Colonic mucosa (tissue), 4 donors: ENCODE measurements at regions of chr1 and their contacts with region 1.

Region 1: DNA sequence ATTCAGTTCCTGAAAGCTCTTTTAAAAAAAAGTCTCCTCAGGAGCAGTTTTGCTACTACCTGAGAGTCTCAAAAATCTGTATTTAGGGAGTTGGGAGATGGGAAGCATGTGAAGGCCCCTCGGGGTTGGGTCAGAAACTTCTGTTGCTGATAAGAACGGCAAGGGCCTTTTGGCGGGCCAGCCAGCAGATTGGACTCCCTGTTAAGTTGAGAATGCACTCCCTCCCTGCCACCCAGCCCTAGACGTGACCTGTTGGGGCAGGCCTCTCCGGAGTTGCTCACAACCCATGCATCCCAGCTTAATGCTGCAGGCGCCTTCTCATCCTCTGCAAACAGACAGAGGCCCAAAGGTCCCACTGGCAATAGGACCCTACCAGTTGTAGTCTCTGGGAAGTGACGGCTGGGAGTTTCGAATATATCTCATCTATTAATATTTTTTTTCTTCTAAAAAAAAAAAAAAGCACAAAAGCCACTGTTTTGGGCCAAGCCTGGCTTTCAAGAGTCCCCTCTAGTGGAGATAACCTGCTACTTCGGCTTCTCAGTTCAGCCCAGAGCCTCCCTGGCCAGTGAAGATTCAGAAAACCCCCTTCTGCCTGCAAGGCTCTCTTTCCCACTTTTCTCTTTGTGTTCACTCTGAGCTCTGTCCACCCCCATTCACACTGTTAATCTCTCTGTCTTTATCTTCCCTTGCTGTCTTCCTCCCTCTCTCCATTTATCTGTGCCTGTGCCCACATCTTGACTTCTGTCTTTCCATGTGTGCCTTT is 5.3 kb downstream of the PLXNA2 start:
- DNase-seq: peak; percentile 44
- H3K4me3 ChIP-seq: no peak overlapping the region
- H3K27ac ChIP-seq: peak overlapping the region; percentile 77
- H3K4me1 ChIP-seq: peaks cover 40% of the 10 kb centered on the region
- H3K27me3 ChIP-seq: no peaks in the 10 kb centered on the region
- CTCF ChIP-seq: peak; percentile 68

Region 2: GRCh38 chr1:208184088-208184911 is 54.6 kb before region 1 on chr1:
- intact Hi-C with region 1: loop called (anchors 10 kb)
- DNase-seq: peak; percentile 86
- H3K4me3 ChIP-seq: no peak overlapping the region
- H3K27ac ChIP-seq: peak overlapping the region; percentile 82
- H3K4me1 ChIP-seq: peaks cover 27% of the 10 kb centered on the region
- H3K27me3 ChIP-seq: no peaks in the 10 kb centered on the region
- CTCF ChIP-seq: no peak

Region 3: GRCh38 chr1:208203127-208203847 is 35.6 kb before region 1 on chr1:
- intact Hi-C with region 1: loop called (anchors 5 kb)
- DNase-seq: peak; percentile 87
- H3K4me3 ChIP-seq: no peak overlapping the region
- H3K27ac ChIP-seq: peak overlapping the region; percentile 78
- H3K4me1 ChIP-seq: peaks cover 13% of the 10 kb centered on the region
- H3K27me3 ChIP-seq: no peaks in the 10 kb centered on the region
- CTCF ChIP-seq: no peak

Region 4: DNA sequence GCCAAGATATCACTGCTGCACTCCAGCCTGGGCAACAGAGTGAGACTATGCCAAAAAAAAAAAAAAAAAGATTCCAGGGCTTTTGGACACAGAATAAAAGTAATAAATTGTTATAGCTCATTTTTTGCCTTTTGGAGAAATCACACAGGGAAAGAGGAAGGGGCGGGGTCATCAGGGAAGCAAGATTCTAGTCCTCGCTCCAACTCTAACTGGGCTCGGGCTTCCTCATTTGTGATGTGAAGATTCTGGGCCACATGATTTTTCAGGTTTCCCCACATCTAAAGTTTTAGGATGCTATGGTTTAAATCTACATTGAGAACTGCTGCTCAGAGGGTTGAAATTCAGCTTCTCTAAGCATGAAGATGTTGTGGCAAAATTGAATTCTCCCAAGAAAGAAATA is 184.6 kb after region 1 on chr1:
- intact Hi-C with region 1: no loop called
- DNase-seq: no peak
- H3K4me3 ChIP-seq: no peak overlapping the region
- H3K27ac ChIP-seq: no peak overlapping the region
- H3K4me1 ChIP-seq: no peaks in the 10 kb centered on the region
- H3K27me3 ChIP-seq: no peaks in the 10 kb centered on the region
- CTCF ChIP-seq: no peak

Region 5: GRCh38 chr1:208437416-208437815 is 198.5 kb after region 1 on chr1:
- intact Hi-C with region 1: no loop called
- DNase-seq: no peak
- H3K4me3 ChIP-seq: no peak overlapping the region
- H3K27ac ChIP-seq: no peak overlapping the region
- H3K4me1 ChIP-seq: no peaks in the 10 kb centered on the region
- H3K27me3 ChIP-seq: no peaks in the 10 kb centered on the region
- CTCF ChIP-seq: no peak